Natural killer cell (primary cell): ENCODE measurements at regions of chr2 and their contacts with region 1.

Region 1: GRCh38 chr2:196239622-196240587 is 68.5 kb upstream of the STK17B start:
- DNase-seq: peak; percentile 74 to 92
- ATAC-seq: peak; percentile 66 to 89 (median 84)
- H3K4me3 ChIP-seq: peak overlapping the region; percentile 9
- H3K4me3 Mint-ChIP-seq: peak overlapping the region; percentile 80
- H3K27ac ChIP-seq: peak overlapping the region; percentile 91
- H3K27ac Mint-ChIP-seq: peak overlapping the region; percentile 97
- H3K4me1 ChIP-seq: peaks cover 61% of the 10 kb centered on the region
- H3K4me1 Mint-ChIP-seq: peaks cover 64 to 74% of the 10 kb centered on the region in 2 donors
- H3K27me3 ChIP-seq: no peaks in the 10 kb centered on the region
- H3K27me3 Mint-ChIP-seq: no peaks in the 10 kb centered on the region
- CTCF ChIP-seq: no peak

Region 2: GRCh38 chr2:196054631-196055030 is 185.3 kb before region 1 on chr2:
- intact Hi-C with region 1: no loop called
- DNase-seq: no peak
- ATAC-seq: no peak
- H3K4me3 ChIP-seq: no peak overlapping the region
- H3K4me3 Mint-ChIP-seq: no peak overlapping the region
- H3K27ac ChIP-seq: no peak overlapping the region
- H3K27ac Mint-ChIP-seq: no peak overlapping the region
- H3K4me1 ChIP-seq: no peaks in the 10 kb centered on the region
- H3K4me1 Mint-ChIP-seq: no peaks in the 10 kb centered on the region
- H3K27me3 ChIP-seq: no peaks in the 10 kb centered on the region
- H3K27me3 Mint-ChIP-seq: no peaks in the 10 kb centered on the region
- CTCF ChIP-seq: no peak

Region 3: DNA sequence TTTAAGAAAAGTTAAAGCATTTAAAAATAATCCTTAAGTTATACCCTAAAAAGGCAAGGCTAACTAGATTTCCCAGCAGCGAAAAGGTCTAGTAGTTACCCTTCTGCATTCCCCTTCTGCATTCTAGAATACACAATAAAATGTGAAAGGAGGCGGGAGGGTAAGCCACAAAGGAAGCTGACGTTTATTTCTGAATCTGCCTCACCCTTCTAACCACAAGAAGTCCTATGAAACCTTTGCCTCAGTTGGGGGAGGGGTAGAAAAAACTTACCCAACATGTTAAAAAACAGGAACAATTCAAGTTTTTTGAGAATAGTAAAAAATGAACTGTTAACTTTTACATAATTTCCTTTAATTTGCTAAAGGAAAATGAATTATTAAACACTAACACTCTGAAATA is 79.8 kb before region 1 on chr2:
- intact Hi-C with region 1: loop called (anchors 1 kb)
- DNase-seq: peak in 1 of 2 donors; percentile 92
- ATAC-seq: peak; percentile 69 to 84 (median 73)
- H3K4me3 ChIP-seq: peak overlapping the region; percentile 17
- H3K4me3 Mint-ChIP-seq: peak overlapping the region; percentile 75
- H3K27ac ChIP-seq: peak overlapping the region; percentile 88
- H3K27ac Mint-ChIP-seq: peak overlapping the region; percentile 86 to 95
- H3K4me1 ChIP-seq: peaks cover 35% of the 10 kb centered on the region
- H3K4me1 Mint-ChIP-seq: peaks cover 56 to 57% of the 10 kb centered on the region in 2 donors
- H3K27me3 ChIP-seq: no peaks in the 10 kb centered on the region
- H3K27me3 Mint-ChIP-seq: no peaks in the 10 kb centered on the region
- CTCF ChIP-seq: no peak

Region 4: DNA sequence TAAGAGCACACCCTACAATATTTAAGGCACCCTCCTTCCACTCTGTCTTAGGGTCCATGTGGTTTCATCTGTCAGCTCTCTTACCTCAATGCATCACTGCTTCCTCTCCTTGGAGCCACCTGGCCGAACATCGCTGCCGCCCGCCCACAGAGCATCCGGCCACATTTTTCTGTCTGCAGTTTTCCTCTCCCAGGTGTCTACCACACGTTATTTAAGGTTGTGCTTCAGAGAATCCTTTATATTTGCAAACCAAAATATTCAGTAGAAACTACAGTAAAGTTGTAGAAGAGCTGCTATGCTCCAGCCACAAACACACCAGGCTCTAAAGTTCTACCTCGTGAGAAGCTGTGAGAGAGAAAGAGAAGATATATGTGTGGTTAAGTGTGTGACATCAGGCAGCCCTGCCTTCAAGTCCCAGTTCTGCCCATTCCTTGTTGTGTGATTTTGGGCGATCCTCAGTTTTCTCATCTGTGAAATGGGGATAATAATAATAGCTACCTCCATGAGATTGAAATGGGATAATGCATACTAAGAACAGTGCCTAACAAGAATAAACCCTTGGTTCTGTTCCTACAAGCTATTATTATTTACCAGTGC is 63.7 kb before region 1 on chr2:
- intact Hi-C with region 1: loop called (anchors 2 kb)
- DNase-seq: peak; percentile 69 to 95
- ATAC-seq: peak; percentile 38 to 58 (median 54)
- H3K4me3 ChIP-seq: peak overlapping the region; percentile 0
- H3K4me3 Mint-ChIP-seq: peak overlapping the region; percentile 79
- H3K27ac ChIP-seq: peak overlapping the region; percentile 83
- H3K27ac Mint-ChIP-seq: peak overlapping the region; percentile 86 to 95
- H3K4me1 ChIP-seq: peaks cover 50% of the 10 kb centered on the region
- H3K4me1 Mint-ChIP-seq: peaks cover 55 to 57% of the 10 kb centered on the region in 2 donors
- H3K27me3 ChIP-seq: no peaks in the 10 kb centered on the region
- H3K27me3 Mint-ChIP-seq: no peaks in the 10 kb centered on the region
- CTCF ChIP-seq: no peak

Region 5: DNA sequence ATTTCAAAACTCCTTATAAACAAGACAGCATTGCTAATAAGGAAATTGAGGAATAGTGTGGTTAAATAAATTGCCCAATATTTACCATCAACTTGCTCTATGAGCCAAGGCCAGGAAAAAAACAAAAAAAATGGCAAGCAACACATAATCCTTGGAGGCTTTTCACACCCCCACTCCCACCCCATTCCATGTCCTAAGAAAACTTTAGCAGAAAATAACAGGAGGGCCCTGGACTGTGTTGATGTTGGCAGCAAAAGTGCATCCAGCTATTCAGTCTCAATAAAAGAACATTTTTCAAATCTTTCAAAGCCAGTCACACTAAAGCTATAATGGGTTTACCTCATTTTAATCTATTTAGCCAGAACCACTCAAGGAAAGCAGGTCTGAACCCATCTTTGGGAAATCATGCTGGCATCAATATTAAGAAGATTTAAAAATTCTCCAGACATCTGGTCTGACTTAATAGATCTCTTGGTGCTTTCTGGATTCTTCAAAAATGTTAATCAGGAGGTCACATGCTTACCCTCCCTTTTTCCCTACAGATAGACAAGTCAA is 33.9 kb before region 1 on chr2:
- intact Hi-C with region 1: loop called (anchors 1 kb)
- DNase-seq: no peak
- ATAC-seq: no peak
- H3K4me3 ChIP-seq: no peak overlapping the region
- H3K4me3 Mint-ChIP-seq: no peak overlapping the region
- H3K27ac ChIP-seq: no peak overlapping the region
- H3K27ac Mint-ChIP-seq: no peak overlapping the region
- H3K4me1 ChIP-seq: peaks cover 11% of the 10 kb centered on the region
- H3K4me1 Mint-ChIP-seq: peaks cover 14 to 18% of the 10 kb centered on the region in 2 donors
- H3K27me3 ChIP-seq: no peaks in the 10 kb centered on the region
- H3K27me3 Mint-ChIP-seq: no peaks in the 10 kb centered on the region
- CTCF ChIP-seq: no peak

Region 6: DNA sequence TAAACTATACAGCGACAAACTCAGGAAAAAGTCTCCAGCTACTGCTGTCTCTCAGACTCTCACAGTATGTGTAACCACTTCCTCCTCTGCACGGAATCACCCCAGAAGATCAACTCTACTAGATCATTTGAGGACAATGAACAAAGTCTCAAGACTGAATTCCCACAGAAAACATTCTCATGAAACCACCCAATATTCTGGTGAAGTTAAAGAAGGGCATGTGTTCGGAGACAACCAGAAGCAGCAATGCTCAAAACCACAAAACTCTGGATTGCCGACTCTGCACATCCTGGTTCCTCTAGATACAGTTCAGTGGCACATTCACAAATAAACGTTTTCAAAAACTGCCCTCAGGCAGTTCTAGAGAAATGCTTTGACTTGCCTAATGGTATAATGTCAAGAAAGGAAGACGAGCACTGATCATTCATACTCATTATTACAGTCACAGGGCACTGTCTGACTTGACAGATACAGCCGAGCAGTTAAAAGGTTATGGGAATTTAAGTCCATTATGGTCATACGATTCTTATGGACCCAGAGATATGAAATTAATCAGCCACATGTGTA is 23.4 kb after region 1 on chr2:
- intact Hi-C with region 1: loop called (anchors 2 kb)
- DNase-seq: peak in 1 of 2 donors; percentile 86
- ATAC-seq: peak; percentile 94 to 99 (median 95)
- H3K4me3 ChIP-seq: no peak overlapping the region
- H3K4me3 Mint-ChIP-seq: peak overlapping the region; percentile 83
- H3K27ac ChIP-seq: peak overlapping the region; percentile 83
- H3K27ac Mint-ChIP-seq: peak overlapping the region; percentile 90 to 92
- H3K4me1 ChIP-seq: peaks cover 11% of the 10 kb centered on the region
- H3K4me1 Mint-ChIP-seq: peaks cover 40 to 41% of the 10 kb centered on the region in 2 donors
- H3K27me3 ChIP-seq: no peaks in the 10 kb centered on the region
- H3K27me3 Mint-ChIP-seq: no peaks in the 10 kb centered on the region
- CTCF ChIP-seq: no peak

Region 7: DNA sequence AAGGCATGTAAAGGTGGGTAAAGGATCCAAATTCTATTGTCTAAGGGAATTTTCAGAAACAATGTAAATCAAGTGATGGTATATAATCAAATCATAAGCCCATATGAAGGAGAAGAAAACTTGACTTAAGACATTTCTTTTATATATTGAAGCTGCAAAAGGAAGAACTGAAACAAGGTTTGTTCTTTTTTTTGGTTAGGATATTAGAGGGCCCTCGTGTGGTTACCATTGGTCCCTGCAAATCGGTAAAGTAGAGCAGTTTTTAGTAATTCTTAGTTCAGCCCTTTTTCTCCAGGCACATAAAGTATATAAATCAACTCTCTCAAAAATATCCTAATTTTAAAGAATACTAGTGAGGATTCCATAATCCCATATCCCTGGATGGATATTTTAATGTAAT is 37.1 kb after region 1 on chr2:
- intact Hi-C with region 1: loop called (anchors 5 kb)
- DNase-seq: peak in 1 of 2 donors; percentile 80
- ATAC-seq: peak; percentile 74 to 78 (median 77)
- H3K4me3 ChIP-seq: no peak overlapping the region
- H3K4me3 Mint-ChIP-seq: peak overlapping the region; percentile 47
- H3K27ac ChIP-seq: no peak overlapping the region
- H3K27ac Mint-ChIP-seq: peak overlapping the region in 1 of 2 donors; percentile 43
- H3K4me1 ChIP-seq: peaks cover 9% of the 10 kb centered on the region
- H3K4me1 Mint-ChIP-seq: peaks cover 17 to 31% of the 10 kb centered on the region in 2 donors
- H3K27me3 ChIP-seq: no peaks in the 10 kb centered on the region
- H3K27me3 Mint-ChIP-seq: peaks cover 0 to 3% of the 10 kb centered on the region in 2 donors
- CTCF ChIP-seq: peak; percentile 75